ENCODE measurements at regions of chr2 and their contacts with region 1.

Region 1: GRCh38 chr2:58046585-58047372 is at the start of gene VRK2:
- DNase-seq: peak; percentile 97
- ATAC-seq: peak; percentile 92
- H3K4me3 ChIP-seq: peak within 1 kb of the TSS; percentile 88
- H3K27ac ChIP-seq: peak within 1 kb of the TSS; percentile 92
- H3K4me1 ChIP-seq: peaks cover 52% of the 10 kb centered on the region
- H3K27me3 ChIP-seq: no peaks in the 10 kb centered on the region
- CTCF ChIP-seq: no peak
- total RNA-seq, gene VRK2: 22.7 and 27.6 TPM in 2 replicates

Region 2: GRCh38 chr2:57080035-57080434 is 966.7 kb before region 1 on chr2:
- CTCF ChIA-PET with region 1: no interaction called
- POLR2A ChIA-PET with region 1: no interaction called
- intact Hi-C with region 1: no loop called
- DNase-seq: peak; percentile 44
- ATAC-seq: no peak
- H3K4me3 ChIP-seq: no peak overlapping the region
- H3K27ac ChIP-seq: no peak overlapping the region
- H3K4me1 ChIP-seq: 0 out of 2 replicates have a peak, but pooled peaks cover 6% of the 10 kb centered on the region
- H3K27me3 ChIP-seq: peaks cover 31% of the 10 kb centered on the region
- CTCF ChIP-seq: no peak

Region 3: DNA sequence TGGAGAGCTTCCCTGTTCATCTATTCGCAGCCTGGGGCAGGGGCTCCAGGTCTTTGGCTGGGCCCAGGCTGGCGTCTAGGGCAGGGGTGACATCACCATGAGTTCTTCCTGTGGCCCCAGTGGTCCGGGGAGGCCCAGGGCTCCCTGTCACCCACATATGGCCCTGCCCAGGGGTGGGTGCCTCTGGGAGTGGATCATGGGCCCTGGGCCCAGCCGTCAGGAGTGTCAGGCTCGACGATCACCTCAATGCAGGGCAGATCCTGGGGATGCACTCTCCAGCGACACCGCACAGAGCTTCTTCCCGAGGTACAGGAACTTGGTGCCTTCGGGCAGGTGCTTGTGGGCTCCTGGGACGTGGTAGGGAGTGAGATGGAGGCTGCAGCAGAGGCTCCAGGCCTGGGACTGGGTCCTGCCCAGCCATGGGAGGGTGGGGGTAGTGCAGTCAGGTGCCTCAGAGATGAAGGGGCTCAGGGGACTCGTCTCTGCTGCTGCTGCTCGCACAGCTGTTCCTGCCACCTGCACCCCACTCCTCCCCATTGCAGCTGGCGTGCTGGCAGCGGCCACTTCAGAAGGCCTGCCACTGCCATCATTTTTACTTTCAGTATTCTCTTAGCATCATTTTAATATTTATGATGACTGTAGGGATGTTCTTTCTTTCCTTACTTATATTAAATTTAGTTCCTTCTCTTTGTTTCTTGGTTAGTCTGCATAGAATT is 196.2 kb before region 1 on chr2:
- CTCF ChIA-PET with region 1: no interaction called
- POLR2A ChIA-PET with region 1: no interaction called
- intact Hi-C with region 1: no loop called
- DNase-seq: no peak
- ATAC-seq: no peak
- H3K4me3 ChIP-seq: no peak overlapping the region
- H3K27ac ChIP-seq: no peak overlapping the region
- H3K4me1 ChIP-seq: no peaks in the 10 kb centered on the region
- H3K27me3 ChIP-seq: no peaks in the 10 kb centered on the region
- CTCF ChIP-seq: no peak

Region 4: GRCh38 chr2:57869758-57870344 is 176.9 kb before region 1 on chr2:
- CTCF ChIA-PET with region 1: interaction called, 3 read pairs
- POLR2A ChIA-PET with region 1: no interaction called
- intact Hi-C with region 1: loop called (anchors 5 kb)
- DNase-seq: peak; percentile 77
- ATAC-seq: no peak
- H3K4me3 ChIP-seq: no peak overlapping the region
- H3K27ac ChIP-seq: peak overlapping the region; percentile 97
- H3K4me1 ChIP-seq: peaks cover 68% of the 10 kb centered on the region
- H3K27me3 ChIP-seq: no peaks in the 10 kb centered on the region
- CTCF ChIP-seq: no peak

Region 5: GRCh38 chr2:57906152-57906732 is 140.5 kb before region 1 on chr2:
- CTCF ChIA-PET with region 1: no interaction called
- POLR2A ChIA-PET with region 1: no interaction called
- intact Hi-C with region 1: loop called (anchors 1 kb)
- DNase-seq: peak; percentile 82
- ATAC-seq: peak; percentile 91
- H3K4me3 ChIP-seq: no peak overlapping the region
- H3K27ac ChIP-seq: no peak overlapping the region
- H3K4me1 ChIP-seq: peaks cover 28% of the 10 kb centered on the region
- H3K27me3 ChIP-seq: no peaks in the 10 kb centered on the region
- CTCF ChIP-seq: peak; percentile 93

Region 6: GRCh38 chr2:58107803-58108710 is 61.3 kb after region 1 on chr2:
- CTCF ChIA-PET with region 1: no interaction called
- POLR2A ChIA-PET with region 1: interaction called, 3 read pairs
- intact Hi-C with region 1: loop called (anchors 2 kb)
- DNase-seq: peak; percentile 93
- ATAC-seq: peak; percentile 79
- H3K4me3 ChIP-seq: peak overlapping the region; percentile 25
- H3K27ac ChIP-seq: peak overlapping the region; percentile 99
- H3K4me1 ChIP-seq: peaks cover 63% of the 10 kb centered on the region
- H3K27me3 ChIP-seq: no peaks in the 10 kb centered on the region
- CTCF ChIP-seq: no peak

Measured in PC-3 (cell line).